Activated CD4-positive, alpha-beta memory T cell treated with anti-CD3 and anti-CD28 coated beads, Interleukin-2, amount 10 ng/mL, durations not matched to agents 7 days and 5 days (primary cell): ENCODE measurements at regions of chr5 and their contacts with region 1.

Region 1: GRCh38 chr5:111234125-111234524 is 9.9 kb downstream of the CAMK4 start:
- DNase-seq: no peak
- H3K4me3 Mint-ChIP-seq: peak overlapping the region; percentile 36
- H3K27ac Mint-ChIP-seq: peak overlapping the region; percentile 82
- H3K4me1 Mint-ChIP-seq: peaks cover 86% of the 10 kb centered on the region
- H3K27me3 Mint-ChIP-seq: no peaks in the 10 kb centered on the region

Region 2: DNA sequence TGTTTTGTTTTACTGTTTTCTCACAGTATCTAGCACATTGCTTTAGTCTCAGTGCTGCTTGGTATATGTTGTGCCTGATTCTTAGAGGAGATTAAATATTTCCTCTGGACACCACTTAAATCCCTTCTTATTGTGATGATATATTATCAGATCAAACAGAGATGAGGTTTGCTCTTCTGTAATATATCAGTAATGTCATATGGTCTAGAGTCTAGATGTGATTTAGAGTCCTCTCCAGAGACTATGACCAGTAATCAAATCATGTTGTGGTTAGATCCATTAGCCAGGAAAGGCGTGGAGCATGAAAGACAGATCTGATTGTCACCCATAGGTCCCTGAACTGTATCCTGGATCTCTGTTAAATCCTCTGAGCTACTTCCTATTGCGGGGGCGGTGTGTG is 14.4 kb after region 1 on chr5:
- CTCF ChIA-PET with region 1: interaction called, 13 read pairs
- POLR2A ChIA-PET with region 1: interaction called, 29 read pairs
- DNase-seq: no peak
- H3K4me3 Mint-ChIP-seq: no peak overlapping the region
- H3K27ac Mint-ChIP-seq: no peak overlapping the region
- H3K4me1 Mint-ChIP-seq: peaks cover 59% of the 10 kb centered on the region
- H3K27me3 Mint-ChIP-seq: no peaks in the 10 kb centered on the region

Region 3: DNA sequence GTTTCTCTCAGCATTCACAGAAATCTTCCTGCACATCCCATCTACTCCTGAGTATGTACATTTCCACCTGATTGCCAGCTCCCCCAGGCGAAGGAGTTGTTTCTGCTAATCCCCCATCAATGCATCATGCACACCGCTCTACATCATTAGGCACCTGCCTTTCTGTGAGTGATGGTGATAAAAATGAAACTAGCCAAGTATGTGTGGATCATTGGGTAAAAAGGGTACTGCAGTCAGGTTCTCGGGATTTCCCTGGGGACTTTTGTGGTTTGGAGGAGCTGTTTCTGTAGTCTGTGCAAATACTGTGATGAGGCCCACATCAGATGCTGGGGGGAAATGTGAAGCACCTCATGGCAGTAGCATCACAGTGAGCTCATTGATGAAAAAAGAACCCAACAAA is 20.5 kb after region 1 on chr5:
- CTCF ChIA-PET with region 1: interaction called, 4 read pairs
- POLR2A ChIA-PET with region 1: interaction called, 29 read pairs
- DNase-seq: peak; percentile 47
- H3K4me3 Mint-ChIP-seq: peak overlapping the region; percentile 18
- H3K27ac Mint-ChIP-seq: peak overlapping the region; percentile 59
- H3K4me1 Mint-ChIP-seq: peaks cover 56% of the 10 kb centered on the region
- H3K27me3 Mint-ChIP-seq: no peaks in the 10 kb centered on the region

Region 4: DNA sequence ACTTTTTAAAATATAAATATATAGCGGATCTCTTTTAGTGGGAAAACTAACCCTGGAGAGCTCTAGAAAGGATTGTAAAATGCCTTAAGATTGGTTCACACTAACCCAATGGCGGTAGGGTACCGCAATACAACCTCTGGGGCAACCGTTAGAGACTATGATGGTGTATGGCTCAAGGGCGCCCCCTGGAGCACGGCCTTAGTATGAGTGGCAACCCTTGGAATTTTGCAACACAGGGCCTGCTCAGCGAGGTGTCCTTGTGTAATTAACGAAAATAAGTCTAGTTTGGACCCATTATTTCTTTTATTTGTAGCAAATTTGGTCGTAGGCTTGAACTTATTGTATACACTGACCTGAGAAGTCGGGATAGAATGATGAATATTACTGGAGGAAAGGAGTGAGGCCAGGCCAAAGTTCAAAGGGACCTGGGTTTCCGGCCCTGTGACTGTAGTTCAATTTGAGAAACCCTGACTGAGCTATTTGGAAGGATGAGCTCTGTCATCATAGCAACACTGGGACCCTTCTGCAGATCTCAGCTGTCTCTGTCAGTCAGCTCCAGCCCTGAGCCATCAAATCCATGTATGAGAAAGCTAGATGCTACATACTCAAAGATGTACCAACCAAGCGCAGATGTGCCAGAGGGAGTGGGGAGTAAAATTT is 44.9 kb after region 1 on chr5:
- CTCF ChIA-PET with region 1: interaction called, 16 read pairs
- POLR2A ChIA-PET with region 1: interaction called, 4 read pairs
- DNase-seq: peak; percentile 87
- H3K4me3 Mint-ChIP-seq: no peak overlapping the region
- H3K27ac Mint-ChIP-seq: no peak overlapping the region
- H3K4me1 Mint-ChIP-seq: peaks cover 10% of the 10 kb centered on the region
- H3K27me3 Mint-ChIP-seq: no peaks in the 10 kb centered on the region